BJ (cell line): ENCODE measurements at regions of chr12 and their contacts with region 1.

Region 1: GRCh38 chr12:109858764-109859163 is 21.6 kb downstream of the GLTP start:
- DNase-seq: no peak
- H3K4me3 ChIP-seq: no peak overlapping the region
- H3K27me3 ChIP-seq: no peaks in the 10 kb centered on the region
- CTCF ChIP-seq: no peak

Region 2: DNA sequence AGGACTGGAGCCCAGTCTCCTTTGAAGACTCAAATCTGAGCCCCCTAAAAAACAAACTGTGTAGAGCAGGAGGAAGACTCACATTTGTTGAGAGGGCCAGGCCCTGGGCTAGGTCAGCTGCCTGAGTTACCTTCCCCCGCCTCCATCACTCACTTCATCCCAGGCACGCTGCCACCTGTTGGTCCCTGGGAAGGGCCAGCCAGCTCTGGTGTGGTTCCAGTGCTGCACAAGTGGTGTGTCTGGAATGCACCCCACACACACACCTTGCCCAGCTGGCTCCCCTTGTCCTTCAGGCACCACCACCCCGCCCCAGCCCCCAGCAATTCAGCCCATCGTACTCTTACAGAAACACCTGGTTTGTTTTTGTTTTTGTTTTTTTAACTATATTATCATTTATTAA is 276.1 kb before region 1 on chr12:
- CTCF ChIA-PET with region 1: no interaction called
- POLR2A ChIA-PET with region 1: no interaction called
- DNase-seq: no peak
- H3K4me3 ChIP-seq: no peak overlapping the region
- H3K27me3 ChIP-seq: no peaks in the 10 kb centered on the region
- CTCF ChIP-seq: no peak

Region 3: GRCh38 chr12:109734219-109735000 is 124.4 kb before region 1 on chr12:
- CTCF ChIA-PET with region 1: no interaction called
- POLR2A ChIA-PET with region 1: no interaction called
- DNase-seq: no peak
- H3K4me3 ChIP-seq: no peak overlapping the region
- H3K27me3 ChIP-seq: no peaks in the 10 kb centered on the region
- CTCF ChIP-seq: no peak

Region 4: GRCh38 chr12:109880016-109880931 is 21.5 kb after region 1 on chr12 and contains the start of gene GLTP:
- CTCF ChIA-PET with region 1: interaction called, 23 read pairs
- POLR2A ChIA-PET with region 1: no interaction called
- DNase-seq: no peak
- H3K4me3 ChIP-seq: peak within 1 kb of the TSS; percentile 75
- H3K27me3 ChIP-seq: no peaks in the 10 kb centered on the region
- CTCF ChIP-seq: 0 out of 2 replicates have a peak, but pooled peaks have one; percentile 4
- polyA plus RNA-seq, gene GLTP: 33.8 and 35.1 TPM in 2 replicates

Region 5: DNA sequence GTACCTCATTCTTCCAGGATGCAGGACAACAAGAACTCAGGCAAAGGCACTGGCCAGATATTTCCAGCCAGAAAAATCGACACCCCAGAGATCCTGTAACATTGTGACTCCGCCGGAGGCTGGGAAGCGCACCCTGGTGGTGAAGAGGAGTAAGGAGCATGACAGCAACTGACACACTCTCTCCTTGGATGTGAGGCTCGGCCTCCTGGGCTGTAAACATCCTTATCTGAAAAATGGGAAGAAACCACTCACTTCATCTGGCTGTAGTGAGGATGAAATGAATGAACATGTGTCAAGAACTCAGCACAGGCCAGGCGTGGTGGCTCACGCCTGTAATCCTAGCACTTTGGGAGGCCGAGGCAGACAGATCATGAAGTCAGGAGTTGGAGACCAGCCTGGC is 68.9 kb after region 1 on chr12:
- CTCF ChIA-PET with region 1: interaction called, 33 read pairs
- POLR2A ChIA-PET with region 1: no interaction called
- DNase-seq: no peak
- H3K4me3 ChIP-seq: no peak overlapping the region
- H3K27me3 ChIP-seq: no peaks in the 10 kb centered on the region
- CTCF ChIP-seq: peak; percentile 82